OCI-LY7 (cell line): ENCODE measurements at regions of chr5 and their contacts with region 1.

Region 1: GRCh38 chr5:11504892-11505545 is 399.2 kb downstream of the CTNND2 start:
- DNase-seq: no peak
- H3K4me3 ChIP-seq: no peak overlapping the region
- H3K27ac ChIP-seq: no peak overlapping the region
- H3K4me1 ChIP-seq: no peaks in the 10 kb centered on the region
- CTCF ChIP-seq: no peak

Region 2: DNA sequence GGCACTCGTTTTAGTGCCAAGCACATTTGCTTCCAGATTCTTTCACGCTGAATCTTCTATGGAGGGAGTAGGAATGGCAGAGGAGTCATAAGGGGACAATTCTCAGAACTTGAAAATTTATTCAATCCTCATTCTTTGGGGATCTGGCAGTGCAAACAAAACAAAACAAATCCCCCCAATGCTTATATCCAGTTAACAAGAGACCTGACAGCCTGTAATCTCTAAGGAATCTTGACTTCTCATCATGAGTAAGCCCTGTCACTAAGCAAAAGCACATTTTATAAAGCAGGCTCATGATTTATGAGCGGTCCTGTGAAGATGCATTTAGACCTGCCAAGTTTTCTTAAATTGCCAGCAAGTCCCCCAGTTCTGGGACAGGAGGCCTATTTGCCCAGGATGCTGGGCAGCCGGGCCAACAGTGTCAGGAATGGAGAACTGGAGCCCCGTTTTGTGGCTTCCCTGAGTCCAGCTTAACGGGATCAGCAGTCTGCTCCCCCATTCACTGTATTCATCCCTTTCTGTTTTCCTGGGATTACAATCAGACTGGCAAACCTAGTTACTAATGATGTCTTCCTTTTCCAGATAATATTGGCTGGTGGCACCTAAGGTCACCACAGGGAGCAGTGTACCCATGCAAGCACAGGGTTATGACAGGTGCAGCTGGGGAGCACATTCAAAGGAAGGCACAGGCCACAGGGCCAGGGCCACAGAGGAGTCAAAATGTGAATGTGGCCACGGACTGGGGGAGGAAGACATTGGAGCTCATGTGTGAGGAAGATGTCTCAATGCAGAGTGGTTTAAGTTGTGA is 114.5 kb before region 1 on chr5:
- CTCF ChIA-PET with region 1: no interaction called
- POLR2A ChIA-PET with region 1: no interaction called
- intact Hi-C with region 1: no loop called
- DNase-seq: no peak
- H3K4me3 ChIP-seq: no peak overlapping the region
- H3K27ac ChIP-seq: no peak overlapping the region
- H3K4me1 ChIP-seq: no peaks in the 10 kb centered on the region
- CTCF ChIP-seq: no peak

Region 3: GRCh38 chr5:12003680-12004079 is 498.7 kb after region 1 on chr5:
- CTCF ChIA-PET with region 1: no interaction called
- POLR2A ChIA-PET with region 1: interaction called, 10 read pairs
- intact Hi-C with region 1: no loop called
- DNase-seq: no peak
- H3K4me3 ChIP-seq: no peak overlapping the region
- H3K27ac ChIP-seq: no peak overlapping the region
- H3K4me1 ChIP-seq: no peaks in the 10 kb centered on the region
- CTCF ChIP-seq: no peak